ENCODE measurements at regions of chr16 and their contacts with region 1.

Region 1: DNA sequence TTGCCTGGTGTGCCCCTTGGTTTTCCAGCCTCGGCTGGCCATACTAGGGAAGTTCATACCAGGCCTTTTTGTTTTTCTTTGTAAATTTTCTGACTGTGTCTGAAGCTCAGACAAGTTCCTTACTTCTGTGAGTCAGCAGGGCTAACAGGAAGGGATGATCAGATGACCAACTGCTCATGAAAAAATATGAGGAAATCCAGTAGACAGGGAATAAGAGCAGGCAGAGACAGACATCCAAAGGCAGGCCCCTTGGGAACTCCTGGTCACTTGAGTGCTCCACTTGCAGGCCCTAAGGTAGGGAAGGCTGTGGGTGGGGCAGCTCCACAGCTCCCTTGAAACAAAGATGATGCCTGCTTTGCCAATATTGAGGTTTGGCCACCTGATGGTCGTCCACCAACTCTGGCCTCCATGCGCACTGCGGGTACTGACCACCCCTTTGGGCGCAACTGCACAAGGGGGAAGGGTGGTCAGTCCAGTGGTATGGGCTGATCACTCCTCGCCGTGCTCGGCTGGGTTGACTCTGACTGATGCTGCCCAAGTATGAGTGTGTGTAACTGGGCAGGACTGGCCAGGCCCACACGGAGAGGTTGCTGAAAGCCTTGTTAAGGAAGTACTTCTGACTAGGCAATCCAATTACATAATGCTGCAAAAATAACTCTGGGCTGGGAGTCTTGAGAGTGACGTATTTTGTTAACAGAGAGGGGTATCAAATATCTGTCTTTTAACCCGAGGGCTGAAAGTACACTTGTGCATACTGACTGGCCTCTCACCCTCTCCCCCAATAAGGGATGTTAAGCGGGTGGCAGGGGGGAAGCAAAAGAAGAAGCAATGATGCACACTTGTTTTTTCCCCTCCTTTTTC is 20.8 kb upstream of the ZFHX3 start:
- DNase-seq: peak; percentile 95
- H3K4me3 ChIP-seq: peak overlapping the region; percentile 35; the same call in 1 of the 2 replicates
- H3K27ac ChIP-seq: peak overlapping the region; percentile 99
- H3K4me1 ChIP-seq: peaks cover 30% of the 10 kb centered on the region
- H3K27me3 ChIP-seq: no peaks in the 10 kb centered on the region

Region 2: DNA sequence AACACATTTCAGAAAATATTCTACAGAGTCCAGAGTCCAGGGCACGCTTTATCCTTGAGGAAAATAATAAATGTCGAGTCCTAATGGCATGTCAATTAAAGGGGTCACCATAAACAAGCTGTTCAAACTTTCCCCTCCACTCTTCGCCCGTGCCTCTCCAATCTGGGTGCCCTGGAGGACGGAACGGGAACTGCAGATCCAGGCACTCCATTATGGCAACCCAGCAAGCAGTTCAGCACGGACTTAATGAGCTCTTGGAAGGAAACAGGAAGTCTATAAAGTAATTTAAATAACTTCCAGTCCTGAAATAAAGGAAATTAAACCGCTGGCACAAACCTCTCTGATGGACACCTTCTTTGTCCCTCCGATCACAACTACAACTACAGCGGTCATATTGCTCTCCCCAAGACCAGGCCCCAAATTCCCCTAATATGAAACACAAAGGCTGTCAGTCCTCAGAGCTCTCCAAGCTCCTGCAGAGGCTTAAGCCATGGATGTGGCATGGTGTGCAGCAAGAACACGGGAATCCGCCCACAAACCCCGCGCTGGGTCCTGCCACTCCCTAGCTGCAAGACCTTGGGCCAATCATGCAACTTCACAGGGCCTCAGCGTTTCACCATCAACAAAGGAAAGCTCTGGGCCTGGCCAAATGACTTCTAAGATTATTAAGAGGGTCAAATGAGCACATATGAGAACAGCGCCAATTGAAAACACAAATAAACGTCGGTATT is 73.5 kb before region 1 on chr16:
- in situ Hi-C with region 1: no loop called
- DNase-seq: no peak
- H3K4me3 ChIP-seq: no peak overlapping the region
- H3K27ac ChIP-seq: no peak overlapping the region
- H3K4me1 ChIP-seq: peaks cover 31% of the 10 kb centered on the region
- H3K27me3 ChIP-seq: no peaks in the 10 kb centered on the region

Region 3: DNA sequence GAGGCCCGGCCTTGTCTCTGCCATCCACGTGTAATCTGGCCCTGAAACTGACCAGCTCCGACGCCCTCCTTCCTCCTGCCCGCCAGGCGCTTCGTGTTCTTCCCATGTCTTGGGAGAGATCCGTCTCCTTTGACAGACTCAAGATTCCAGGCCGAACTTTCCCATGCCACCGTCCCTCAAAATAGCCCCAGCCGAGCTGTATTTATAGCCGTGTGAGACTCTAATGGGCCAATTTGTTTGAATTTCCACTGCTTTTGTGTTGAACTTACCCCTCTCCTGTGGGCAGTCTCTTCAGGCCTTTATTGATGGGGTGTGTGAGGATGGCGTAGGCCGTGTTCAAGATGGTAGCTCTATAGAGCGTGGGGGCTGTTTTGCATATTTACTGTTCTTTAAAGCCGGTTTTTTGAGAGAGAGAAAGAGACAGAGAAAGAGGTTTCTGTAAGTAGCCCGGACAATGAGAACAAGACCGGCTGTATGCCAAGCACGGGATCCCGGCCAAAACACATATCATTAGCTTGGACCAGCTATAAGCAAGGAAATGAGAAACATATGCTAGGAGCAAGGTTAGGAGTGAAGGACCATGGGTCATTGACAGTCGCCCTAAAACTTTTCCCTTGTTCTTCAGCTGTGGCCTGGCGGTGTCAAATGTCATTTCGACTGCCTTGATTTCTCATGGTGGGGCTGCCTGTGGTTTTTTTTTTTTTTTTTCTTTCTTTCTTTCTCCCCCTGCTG is 103.6 kb after region 1 on chr16:
- in situ Hi-C with region 1: loop called (anchors 10 kb)
- DNase-seq: peak; percentile 83
- H3K4me3 ChIP-seq: peak overlapping the region; percentile 29; the same call in 1 of the 2 replicates
- H3K27ac ChIP-seq: peak overlapping the region; percentile 30; the same call in 1 of the 2 replicates
- H3K4me1 ChIP-seq: peaks cover 25% of the 10 kb centered on the region
- H3K27me3 ChIP-seq: peaks cover 3% of the 10 kb centered on the region; the same call in 1 of the 2 replicates

Region 4: GRCh38 chr16:73192232-73192894 is 123.6 kb after region 1 on chr16:
- in situ Hi-C with region 1: no loop called
- DNase-seq: peak; percentile 91
- H3K4me3 ChIP-seq: peak overlapping the region; percentile 36
- H3K27ac ChIP-seq: peak overlapping the region; percentile 56
- H3K4me1 ChIP-seq: peaks cover 13% of the 10 kb centered on the region
- H3K27me3 ChIP-seq: no peaks in the 10 kb centered on the region

Measured in GM23248 (cell line).